ENCODE measurements at regions of chr2 and their contacts with region 1.

Region 1: DNA sequence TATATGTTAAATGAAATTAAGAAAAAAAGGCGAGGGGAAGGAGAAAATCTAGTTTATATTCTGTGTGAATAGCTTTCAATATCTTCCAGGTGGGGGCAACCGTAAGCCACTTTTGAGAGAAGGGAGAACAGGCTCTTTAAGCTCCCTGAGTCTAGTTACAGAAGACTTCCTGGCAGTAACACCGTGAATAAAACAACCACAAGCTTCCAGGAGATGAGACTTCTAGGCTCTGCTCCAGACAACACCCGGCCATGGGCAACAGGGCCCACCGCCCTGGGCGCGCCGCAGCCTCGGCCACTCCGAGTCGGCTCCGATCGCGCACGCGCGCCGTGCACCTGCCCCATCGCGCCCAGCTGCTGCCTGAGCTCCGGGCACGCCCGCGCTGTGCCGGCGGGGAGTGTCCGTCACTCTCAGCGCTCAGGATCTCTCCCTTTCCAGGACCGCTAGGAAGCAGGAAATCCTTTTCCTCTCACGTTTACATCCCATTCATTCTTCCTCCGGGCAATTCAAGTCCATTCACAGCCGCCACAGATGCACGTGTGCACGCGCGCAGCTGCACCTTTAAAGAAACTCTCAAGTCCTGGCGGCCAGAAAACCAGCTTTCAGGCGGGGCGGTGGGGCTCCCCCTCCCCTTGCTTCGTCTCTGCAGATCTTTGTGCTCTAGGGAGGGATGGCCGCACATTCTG is 19.4 kb upstream of the PAX3 start:
- DNase-seq: peak; percentile 67
- ATAC-seq: peak; percentile 93
- H3K4me3 ChIP-seq: peak overlapping the region; percentile 75
- H3K27ac ChIP-seq: no peak overlapping the region
- H3K4me1 ChIP-seq: peaks cover 6% of the 10 kb centered on the region
- H3K27me3 ChIP-seq: peaks cover 57% of the 10 kb centered on the region
- CTCF ChIP-seq: peak; percentile 64

Region 2: GRCh38 chr2:222057347-222058073 is 260.7 kb before region 1 on chr2:
- CTCF ChIA-PET with region 1: no interaction called
- POLR2A ChIA-PET with region 1: no interaction called
- intact Hi-C with region 1: loop called (anchors 10 kb)
- DNase-seq: peak; percentile 21
- ATAC-seq: 0 out of 2 replicates have a peak, but pooled peaks have one; percentile 24
- H3K4me3 ChIP-seq: no peak overlapping the region
- H3K27ac ChIP-seq: no peak overlapping the region
- H3K4me1 ChIP-seq: peaks cover 6% of the 10 kb centered on the region
- H3K27me3 ChIP-seq: peaks cover 58% of the 10 kb centered on the region
- CTCF ChIP-seq: peak; percentile 81

Region 3: DNA sequence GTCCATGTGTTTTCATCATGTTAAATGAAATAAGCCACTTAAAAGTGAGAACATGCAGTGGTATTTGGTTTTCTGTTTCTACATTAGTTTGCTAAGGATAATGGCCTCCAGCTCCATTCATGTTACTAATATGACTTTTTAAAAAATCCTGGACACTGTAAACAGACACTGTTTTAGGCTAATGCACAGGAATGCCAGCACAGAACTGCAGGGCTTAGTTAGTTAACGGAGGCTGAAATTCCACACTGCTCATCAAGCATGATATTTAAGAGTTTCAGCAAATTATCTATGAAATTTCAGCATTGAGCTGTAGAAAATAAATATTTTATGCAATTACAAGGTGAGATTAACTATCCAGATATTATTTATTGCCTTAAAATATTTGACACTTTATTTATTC is 23.2 kb after region 1 on chr2:
- CTCF ChIA-PET with region 1: no interaction called
- POLR2A ChIA-PET with region 1: no interaction called
- intact Hi-C with region 1: loop called (anchors 1 kb)
- DNase-seq: no peak
- ATAC-seq: no peak
- H3K4me3 ChIP-seq: no peak overlapping the region
- H3K27ac ChIP-seq: no peak overlapping the region
- H3K4me1 ChIP-seq: no peaks in the 10 kb centered on the region
- H3K27me3 ChIP-seq: peaks cover 20% of the 10 kb centered on the region; the same call in 1 of the 2 replicates
- CTCF ChIP-seq: no peak

Region 4: DNA sequence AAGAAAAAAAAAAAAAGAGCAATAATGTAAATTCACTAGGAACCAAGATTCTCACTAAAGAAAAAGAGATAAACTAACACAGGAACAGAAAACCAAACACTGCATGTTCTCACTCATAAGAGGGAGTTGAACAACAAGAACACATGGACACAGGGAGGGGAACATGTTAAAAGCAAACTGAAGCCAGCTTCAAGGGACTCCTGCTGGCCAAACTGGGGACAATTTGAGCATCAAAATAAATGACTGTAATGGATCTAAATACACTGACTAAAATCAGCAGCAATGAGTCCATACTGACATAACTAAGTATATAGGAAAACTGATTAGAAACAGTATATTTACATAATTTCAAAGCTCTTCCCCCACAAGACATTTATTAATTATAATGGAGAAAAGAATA is 264.8 kb after region 1 on chr2:
- CTCF ChIA-PET with region 1: no interaction called
- POLR2A ChIA-PET with region 1: no interaction called
- intact Hi-C with region 1: loop called (anchors 1 kb)
- DNase-seq: peak; percentile 25
- ATAC-seq: peak; percentile 57
- H3K4me3 ChIP-seq: no peak overlapping the region
- H3K27ac ChIP-seq: no peak overlapping the region
- H3K4me1 ChIP-seq: no peaks in the 10 kb centered on the region
- H3K27me3 ChIP-seq: no peaks in the 10 kb centered on the region
- CTCF ChIP-seq: peak; percentile 54

Region 5: GRCh38 chr2:222613715-222614331 is 295.7 kb after region 1 on chr2:
- CTCF ChIA-PET with region 1: interaction called, 7 read pairs
- POLR2A ChIA-PET with region 1: no interaction called
- intact Hi-C with region 1: loop called (anchors 1 kb)
- DNase-seq: peak; percentile 61
- ATAC-seq: peak; percentile 80
- H3K4me3 ChIP-seq: no peak overlapping the region
- H3K27ac ChIP-seq: no peak overlapping the region
- H3K4me1 ChIP-seq: no peaks in the 10 kb centered on the region
- H3K27me3 ChIP-seq: no peaks in the 10 kb centered on the region
- CTCF ChIP-seq: peak; percentile 85